Posterior cingulate gyrus (tissue), 11 donors: ENCODE measurements at regions of chr1 and their contacts with region 1.

Region 1: DNA sequence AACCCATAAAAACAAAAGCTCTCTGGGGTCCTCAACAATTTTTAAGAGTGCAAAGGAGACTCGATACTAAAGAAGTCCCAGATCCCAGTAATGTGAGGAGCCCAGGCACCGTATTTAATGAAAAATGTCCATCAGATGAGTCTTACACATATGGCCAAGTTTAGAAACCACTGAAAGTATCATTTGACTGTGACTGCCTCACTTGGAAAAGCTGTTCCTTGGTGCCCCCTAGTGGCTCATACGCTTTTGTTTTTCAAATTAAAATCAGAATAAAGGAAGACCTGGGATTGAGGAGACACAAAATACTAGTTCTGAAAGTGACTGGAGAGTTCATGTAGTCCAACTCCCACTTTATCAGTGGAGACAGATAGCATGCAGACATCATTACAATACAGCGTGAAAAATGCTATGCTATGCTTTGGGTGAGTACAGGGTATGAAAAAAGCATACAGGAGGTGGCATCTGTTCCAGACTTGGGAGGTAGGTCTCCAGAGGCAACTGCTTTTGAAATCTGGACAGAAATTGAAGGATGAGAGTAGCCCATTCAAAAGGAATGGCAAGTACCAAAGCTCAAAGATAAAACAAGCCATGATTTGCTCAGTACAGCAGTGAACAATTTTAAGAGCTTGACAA is 33.8 kb downstream of the GDAP2 start:
- DNase-seq: peak in 6 of 10 donors; percentile 33 to 76 (median 46)

Region 2: GRCh38 chr1:117512743-117513321 is 382.8 kb before region 1 on chr1:
- intact Hi-C with region 1: loop called (anchors 10 kb)
- DNase-seq: no peak

Region 3: GRCh38 chr1:117654493-117655219 is 240.9 kb before region 1 on chr1:
- intact Hi-C with region 1: no loop called
- DNase-seq: no peak

Region 4: GRCh38 chr1:118266436-118266835 is 370.8 kb after region 1 on chr1:
- intact Hi-C with region 1: no loop called
- DNase-seq: no peak